ENCODE measurements at regions of chr6 and their contacts with region 1.

Region 1: GRCh38 chr6:87832025-87832825 is 130.2 kb upstream of the AKIRIN2 start:
- DNase-seq: peak; percentile 51
- ATAC-seq: peak; percentile 88
- H3K4me3 ChIP-seq: peak overlapping the region; percentile 15; the same call in 1 of the 2 replicates
- H3K27ac ChIP-seq: peak overlapping the region; percentile 77
- H3K4me1 ChIP-seq: peaks cover 10% of the 10 kb centered on the region
- H3K27me3 ChIP-seq: no peaks in the 10 kb centered on the region
- CTCF ChIP-seq: peak; percentile 43 to 69 (median 54); a peak in 5 of 6 replicates
- EP300 ChIP-seq: peak in 1 of 2 experiments; percentile 32; a peak in 1 of 4 replicates
- POLR2A ChIP-seq: no peak
- RAD21 ChIP-seq: peak; percentile 80

Region 2: DNA sequence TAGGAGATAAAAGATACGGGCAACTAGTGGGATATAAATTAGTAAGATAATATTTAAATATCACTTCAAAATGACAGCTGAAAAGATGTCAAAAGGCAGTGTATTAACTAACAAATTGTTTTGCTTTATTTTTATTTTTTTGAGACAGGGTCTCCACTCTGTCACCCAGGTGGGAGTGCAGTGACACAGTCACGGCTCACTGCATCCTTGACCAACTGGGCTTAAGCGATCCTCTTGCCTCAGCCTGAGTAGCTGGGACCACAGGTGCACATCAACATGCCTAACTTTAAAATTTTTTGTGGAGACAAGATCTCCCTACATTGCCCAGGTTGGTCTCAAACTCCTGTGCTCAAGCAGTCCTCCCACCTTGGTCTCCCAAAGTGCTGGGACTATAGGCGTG is 670.9 kb before region 1 on chr6:
- CTCF ChIA-PET with region 1: no interaction called
- POLR2A ChIA-PET with region 1: no interaction called
- RAD21 ChIA-PET with region 1: no interaction called
- SMC1A ChIA-PET with region 1: no interaction called
- in situ Hi-C with region 1: no loop called
- intact Hi-C with region 1: no loop called
- DNase-seq: no peak
- ATAC-seq: peak; percentile 32
- H3K4me3 ChIP-seq: peak overlapping the region; percentile 22; the same call in 1 of the 2 replicates
- H3K27ac ChIP-seq: no peak overlapping the region
- H3K4me1 ChIP-seq: peaks cover 8% of the 10 kb centered on the region
- H3K27me3 ChIP-seq: no peaks in the 10 kb centered on the region
- CTCF ChIP-seq: no peak
- EP300 ChIP-seq: no peak
- POLR2A ChIP-seq: no peak
- RAD21 ChIP-seq: no peak

Region 3: GRCh38 chr6:87393022-87393622 is 439.1 kb before region 1 on chr6:
- CTCF ChIA-PET with region 1: interaction called, 21 read pairs
- POLR2A ChIA-PET with region 1: no interaction called
- RAD21 ChIA-PET with region 1: interaction called, 13 read pairs
- SMC1A ChIA-PET with region 1: interaction called, 12 read pairs
- in situ Hi-C with region 1: no loop called
- intact Hi-C with region 1: no loop called
- DNase-seq: no peak
- ATAC-seq: peak; percentile 84
- H3K4me3 ChIP-seq: no peak overlapping the region
- H3K27ac ChIP-seq: no peak overlapping the region
- H3K4me1 ChIP-seq: no peaks in the 10 kb centered on the region
- H3K27me3 ChIP-seq: no peaks in the 10 kb centered on the region
- CTCF ChIP-seq: peak; percentile 55 to 63 (median 58); a peak in 5 of 6 replicates
- EP300 ChIP-seq: no peak
- POLR2A ChIP-seq: no peak
- RAD21 ChIP-seq: peak; percentile 78

Region 4: GRCh38 chr6:87756858-87757257 is 75.4 kb before region 1 on chr6:
- CTCF ChIA-PET with region 1: interaction called, 8 read pairs
- POLR2A ChIA-PET with region 1: no interaction called
- RAD21 ChIA-PET with region 1: interaction called, 10 read pairs
- SMC1A ChIA-PET with region 1: interaction called, 5 read pairs
- in situ Hi-C with region 1: no loop called
- intact Hi-C with region 1: no loop called
- DNase-seq: peak; percentile 97
- ATAC-seq: peak; percentile 93
- H3K4me3 ChIP-seq: no peak overlapping the region
- H3K27ac ChIP-seq: peak overlapping the region; percentile 75
- H3K4me1 ChIP-seq: peaks cover 37% of the 10 kb centered on the region
- H3K27me3 ChIP-seq: no peaks in the 10 kb centered on the region
- CTCF ChIP-seq: no peak
- EP300 ChIP-seq: peak; percentile 90 to 93
- POLR2A ChIP-seq: no peak
- RAD21 ChIP-seq: peak; percentile 16; the same call in 1 of the 2 replicates

Region 5: GRCh38 chr6:87848574-87848973 is 16.3 kb after region 1 on chr6:
- CTCF ChIA-PET with region 1: interaction called, 16 read pairs
- POLR2A ChIA-PET with region 1: no interaction called
- RAD21 ChIA-PET with region 1: interaction called, 14 read pairs
- SMC1A ChIA-PET with region 1: interaction called, 13 read pairs
- in situ Hi-C with region 1: no loop called
- intact Hi-C with region 1: no loop called
- DNase-seq: no peak
- ATAC-seq: no peak
- H3K4me3 ChIP-seq: no peak overlapping the region
- H3K27ac ChIP-seq: no peak overlapping the region
- H3K4me1 ChIP-seq: no peaks in the 10 kb centered on the region
- H3K27me3 ChIP-seq: no peaks in the 10 kb centered on the region
- CTCF ChIP-seq: no peak
- EP300 ChIP-seq: no peak
- POLR2A ChIP-seq: no peak
- RAD21 ChIP-seq: no peak

Region 6: GRCh38 chr6:87929843-87930288 is 97.6 kb after region 1 on chr6:
- CTCF ChIA-PET with region 1: interaction called, 43 read pairs
- POLR2A ChIA-PET with region 1: interaction called, 5 read pairs
- RAD21 ChIA-PET with region 1: interaction called, 41 read pairs
- SMC1A ChIA-PET with region 1: interaction called, 127 read pairs
- in situ Hi-C with region 1: loop called (anchors 5 kb)
- intact Hi-C with region 1: loop called (anchors 1 kb)
- DNase-seq: peak; percentile 71
- ATAC-seq: peak; percentile 84
- H3K4me3 ChIP-seq: no peak overlapping the region
- H3K27ac ChIP-seq: peak overlapping the region; percentile 6; the same call in 1 of the 2 replicates
- H3K4me1 ChIP-seq: peaks cover 32% of the 10 kb centered on the region
- H3K27me3 ChIP-seq: no peaks in the 10 kb centered on the region
- CTCF ChIP-seq: peak; percentile 92 to 96 (median 92)
- EP300 ChIP-seq: peak in 1 of 2 experiments; percentile 7; a peak in 1 of 4 replicates
- POLR2A ChIP-seq: no peak
- RAD21 ChIP-seq: peak; percentile 98

Region 7: DNA sequence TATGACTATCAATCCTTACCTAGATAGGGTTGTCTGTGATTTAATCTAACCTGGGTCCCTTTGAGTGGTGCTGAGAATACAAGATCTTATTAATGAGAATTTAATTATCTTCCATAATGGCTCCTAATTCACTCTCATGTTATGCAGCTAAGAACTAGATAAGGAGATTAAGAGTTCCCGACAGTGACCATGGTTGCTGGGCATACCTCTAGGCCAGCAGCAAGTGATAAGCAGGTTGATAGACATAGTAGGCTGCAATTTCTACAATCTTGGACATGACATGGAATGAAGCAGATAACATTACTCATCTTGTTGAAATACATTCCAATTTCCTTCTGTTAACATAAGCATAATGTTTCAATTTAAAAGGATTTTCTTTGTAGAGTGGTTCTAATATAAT is 242.6 kb after region 1 on chr6:
- CTCF ChIA-PET with region 1: no interaction called
- POLR2A ChIA-PET with region 1: no interaction called
- RAD21 ChIA-PET with region 1: no interaction called
- SMC1A ChIA-PET with region 1: no interaction called
- in situ Hi-C with region 1: no loop called
- intact Hi-C with region 1: no loop called
- DNase-seq: no peak
- ATAC-seq: no peak
- H3K4me3 ChIP-seq: no peak overlapping the region
- H3K27ac ChIP-seq: no peak overlapping the region
- H3K4me1 ChIP-seq: no peaks in the 10 kb centered on the region
- H3K27me3 ChIP-seq: no peaks in the 10 kb centered on the region; a peak in 1 of 4 replicates
- CTCF ChIP-seq: no peak
- EP300 ChIP-seq: no peak
- POLR2A ChIP-seq: no peak
- RAD21 ChIP-seq: no peak

Region 8: GRCh38 chr6:88177961-88178464 is 345.8 kb after region 1 on chr6:
- CTCF ChIA-PET with region 1: interaction called, 3 read pairs
- POLR2A ChIA-PET with region 1: no interaction called
- RAD21 ChIA-PET with region 1: interaction called, 3 read pairs
- SMC1A ChIA-PET with region 1: interaction called, 4 read pairs
- in situ Hi-C with region 1: no loop called
- intact Hi-C with region 1: loop called (anchors 1 kb)
- DNase-seq: peak; percentile 32
- ATAC-seq: peak; percentile 75
- H3K4me3 ChIP-seq: no peak overlapping the region
- H3K27ac ChIP-seq: no peak overlapping the region
- H3K4me1 ChIP-seq: peaks cover 16% of the 10 kb centered on the region; the same call in 1 of the 2 replicates
- H3K27me3 ChIP-seq: no peaks in the 10 kb centered on the region
- CTCF ChIP-seq: no peak
- EP300 ChIP-seq: no peak
- POLR2A ChIP-seq: no peak
- RAD21 ChIP-seq: no peak

Region 9: GRCh38 chr6:88403486-88403885 is 571.3 kb after region 1 on chr6:
- CTCF ChIA-PET with region 1: no interaction called
- POLR2A ChIA-PET with region 1: no interaction called
- RAD21 ChIA-PET with region 1: no interaction called
- SMC1A ChIA-PET with region 1: no interaction called
- in situ Hi-C with region 1: no loop called
- intact Hi-C with region 1: no loop called
- DNase-seq: no peak
- ATAC-seq: no peak
- H3K4me3 ChIP-seq: no peak overlapping the region
- H3K27ac ChIP-seq: no peak overlapping the region
- H3K4me1 ChIP-seq: no peaks in the 10 kb centered on the region
- H3K27me3 ChIP-seq: no peaks in the 10 kb centered on the region
- CTCF ChIP-seq: no peak
- EP300 ChIP-seq: no peak
- POLR2A ChIP-seq: no peak
- RAD21 ChIP-seq: no peak

Region 10: DNA sequence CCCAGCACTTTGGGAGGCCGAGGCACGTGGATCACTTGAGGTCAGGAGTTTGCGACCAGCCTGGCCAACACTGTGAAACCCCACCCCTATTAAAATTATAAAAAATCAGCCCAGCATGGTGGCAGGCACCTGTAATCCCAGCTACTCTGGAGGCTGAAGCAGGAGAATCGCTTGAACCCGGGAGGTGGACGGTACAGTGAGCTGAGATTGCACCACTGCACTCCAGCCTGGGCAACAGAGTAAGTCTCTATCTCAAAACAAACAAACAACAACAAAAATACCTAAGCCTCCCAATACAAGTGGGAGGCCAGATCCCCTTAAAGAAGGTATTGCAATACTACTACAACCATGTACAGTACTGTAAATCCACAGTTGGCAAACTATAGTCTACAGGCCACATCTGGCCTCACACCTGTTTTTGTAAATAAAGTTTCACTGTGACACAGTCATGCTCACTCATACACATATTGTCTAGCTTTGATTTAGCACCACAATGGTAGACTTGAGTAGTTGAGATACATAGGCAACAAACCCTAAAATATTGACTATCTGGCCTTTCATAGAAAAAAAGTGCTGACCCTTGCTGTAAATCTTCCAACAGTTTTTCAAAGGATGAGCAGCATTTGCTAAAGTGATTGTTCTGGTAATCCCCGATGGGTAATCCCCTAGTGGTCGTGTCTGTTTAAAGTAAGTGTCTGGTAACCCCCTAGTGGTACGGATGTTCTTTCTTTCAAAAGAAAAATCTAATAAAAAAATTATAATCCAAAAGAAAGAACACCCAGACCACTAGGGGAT is 929.2 kb after region 1 on chr6:
- CTCF ChIA-PET with region 1: interaction called, 3 read pairs
- POLR2A ChIA-PET with region 1: no interaction called
- RAD21 ChIA-PET with region 1: interaction called, 14 read pairs
- SMC1A ChIA-PET with region 1: interaction called, 3 read pairs
- in situ Hi-C with region 1: no loop called
- intact Hi-C with region 1: no loop called
- DNase-seq: peak; percentile 77
- ATAC-seq: peak; percentile 80
- H3K4me3 ChIP-seq: no peak overlapping the region
- H3K27ac ChIP-seq: peak overlapping the region; percentile 94
- H3K4me1 ChIP-seq: peaks cover 13% of the 10 kb centered on the region
- H3K27me3 ChIP-seq: no peaks in the 10 kb centered on the region
- CTCF ChIP-seq: peak; percentile 26 to 42 (median 37); a peak in 4 of 6 replicates
- EP300 ChIP-seq: peak; percentile 56 to 67; a peak in 2 of 4 replicates
- POLR2A ChIP-seq: no peak
- RAD21 ChIP-seq: peak; percentile 71